PC-9 (cell line): ENCODE measurements at regions of chr1 and their contacts with region 1.

Region 1: DNA sequence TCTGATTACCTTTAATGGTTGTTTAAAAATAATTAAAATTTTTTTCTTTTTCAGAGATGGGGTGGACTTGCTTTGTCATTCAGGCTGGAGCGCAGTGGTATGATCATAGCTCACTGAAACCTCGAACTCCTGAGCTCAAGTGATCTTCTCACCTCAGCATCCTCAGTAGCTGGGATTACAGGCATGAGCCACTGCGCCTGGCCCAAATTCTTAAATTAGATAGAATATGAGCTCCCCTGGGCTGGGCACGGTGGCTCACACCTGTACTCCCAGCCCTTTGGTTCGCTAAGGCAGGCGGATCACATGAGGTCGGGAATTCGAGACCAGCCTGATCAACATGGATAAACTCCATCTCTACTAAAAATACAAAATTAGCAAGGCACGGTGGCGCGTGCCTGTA is 17.0 kb downstream of the CERS2 start:
- DNase-seq: no peak
- H3K4me3 ChIP-seq: no peak overlapping the region
- H3K27ac ChIP-seq: no peak overlapping the region
- H3K4me1 ChIP-seq: no peaks in the 10 kb centered on the region
- H3K27me3 ChIP-seq: no peaks in the 10 kb centered on the region
- CTCF ChIP-seq: no peak

Region 2: GRCh38 chr1:150221552-150221951 is 736.1 kb before region 1 on chr1:
- CTCF ChIA-PET with region 1: interaction called, 12 read pairs
- POLR2A ChIA-PET with region 1: no interaction called
- intact Hi-C with region 1: no loop called
- DNase-seq: no peak
- H3K4me3 ChIP-seq: no peak overlapping the region
- H3K27ac ChIP-seq: no peak overlapping the region
- H3K4me1 ChIP-seq: no peaks in the 10 kb centered on the region
- H3K27me3 ChIP-seq: no peaks in the 10 kb centered on the region
- CTCF ChIP-seq: peak; percentile 67

Region 3: GRCh38 chr1:150967936-150968890 is 10.5 kb after region 1 on chr1:
- CTCF ChIA-PET with region 1: no interaction called
- POLR2A ChIA-PET with region 1: interaction called, 16 read pairs
- intact Hi-C with region 1: no loop called
- DNase-seq: no peak
- H3K4me3 ChIP-seq: no peak overlapping the region
- H3K27ac ChIP-seq: no peak overlapping the region
- H3K4me1 ChIP-seq: peaks cover 20% of the 10 kb centered on the region
- H3K27me3 ChIP-seq: no peaks in the 10 kb centered on the region
- CTCF ChIP-seq: no peak

Region 4: DNA sequence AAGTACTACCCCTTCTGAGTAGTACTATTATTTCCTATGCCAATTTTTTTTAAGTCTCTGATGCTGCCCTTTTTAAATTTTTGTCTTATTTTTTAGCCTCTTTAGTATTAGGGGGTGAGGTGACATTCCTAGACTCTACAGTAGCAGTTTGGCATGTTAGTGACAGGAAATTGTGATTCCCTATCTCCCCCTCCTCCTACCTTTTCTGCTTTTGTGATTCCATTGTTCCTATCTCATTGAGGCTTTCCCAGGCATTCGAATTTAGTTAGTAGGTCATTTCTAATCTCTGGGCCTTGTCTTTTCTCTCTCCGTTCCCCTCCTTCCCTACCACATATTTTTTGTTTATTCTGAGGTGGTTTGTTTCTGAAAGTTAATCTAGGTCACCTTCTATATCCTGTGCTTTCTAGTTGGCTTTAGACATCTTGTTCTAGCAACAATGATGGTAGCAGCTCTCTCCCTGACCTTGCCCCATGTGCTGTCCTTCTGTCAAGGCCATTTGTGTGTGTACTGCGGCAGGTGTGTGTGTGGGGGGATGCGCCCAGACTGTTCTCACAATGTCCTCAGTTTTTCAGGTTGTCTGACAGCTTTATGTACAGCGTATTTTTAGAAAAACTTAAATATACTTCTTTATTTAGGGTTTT is 167.2 kb after region 1 on chr1:
- CTCF ChIA-PET with region 1: no interaction called
- POLR2A ChIA-PET with region 1: no interaction called
- intact Hi-C with region 1: no loop called
- DNase-seq: no peak
- H3K4me3 ChIP-seq: no peak overlapping the region
- H3K27ac ChIP-seq: no peak overlapping the region
- H3K4me1 ChIP-seq: no peaks in the 10 kb centered on the region
- H3K27me3 ChIP-seq: no peaks in the 10 kb centered on the region
- CTCF ChIP-seq: no peak

Region 5: GRCh38 chr1:151165738-151166505 is 208.3 kb after region 1 on chr1 and contains the starts of genes LYSMD1 and SCNM1:
- CTCF ChIA-PET with region 1: no interaction called
- POLR2A ChIA-PET with region 1: interaction called, 21 read pairs
- intact Hi-C with region 1: no loop called
- DNase-seq: peak; percentile 94 to 96
- H3K4me3 ChIP-seq: peak within 1 kb of the TSS; percentile 64
- H3K27ac ChIP-seq: peak within 1 kb of the TSS; percentile 66
- H3K4me1 ChIP-seq: peaks cover 15% of the 10 kb centered on the region; the same call in 1 of the 2 replicates
- H3K27me3 ChIP-seq: no peaks in the 10 kb centered on the region
- CTCF ChIP-seq: no peak
- total RNA-seq, gene LYSMD1: 7.6 and 12.8 TPM in 2 replicates
- total RNA-seq, gene SCNM1: 42.5 and 47.7 TPM in 2 replicates